Calu3 (cell line): ENCODE measurements at regions of chr1 and their contacts with region 1.

Region 1: GRCh38 chr1:219347921-219348391 is 174.3 kb downstream of the LYPLAL1 start:
- DNase-seq: no peak
- H3K4me3 Mint-ChIP-seq: no peak overlapping the region
- H3K27ac Mint-ChIP-seq: no peak overlapping the region
- H3K4me1 Mint-ChIP-seq: no peaks in the 10 kb centered on the region
- H3K27me3 Mint-ChIP-seq: no peaks in the 10 kb centered on the region
- CTCF ChIP-seq: no peak

Region 2: GRCh38 chr1:218837051-218837450 is 510.9 kb before region 1 on chr1:
- CTCF ChIA-PET with region 1: no interaction called
- intact Hi-C with region 1: no loop called
- DNase-seq: no peak
- H3K4me3 Mint-ChIP-seq: no peak overlapping the region
- H3K27ac Mint-ChIP-seq: no peak overlapping the region
- H3K4me1 Mint-ChIP-seq: peaks cover 9% of the 10 kb centered on the region
- H3K27me3 Mint-ChIP-seq: no peaks in the 10 kb centered on the region
- CTCF ChIP-seq: no peak

Region 3: DNA sequence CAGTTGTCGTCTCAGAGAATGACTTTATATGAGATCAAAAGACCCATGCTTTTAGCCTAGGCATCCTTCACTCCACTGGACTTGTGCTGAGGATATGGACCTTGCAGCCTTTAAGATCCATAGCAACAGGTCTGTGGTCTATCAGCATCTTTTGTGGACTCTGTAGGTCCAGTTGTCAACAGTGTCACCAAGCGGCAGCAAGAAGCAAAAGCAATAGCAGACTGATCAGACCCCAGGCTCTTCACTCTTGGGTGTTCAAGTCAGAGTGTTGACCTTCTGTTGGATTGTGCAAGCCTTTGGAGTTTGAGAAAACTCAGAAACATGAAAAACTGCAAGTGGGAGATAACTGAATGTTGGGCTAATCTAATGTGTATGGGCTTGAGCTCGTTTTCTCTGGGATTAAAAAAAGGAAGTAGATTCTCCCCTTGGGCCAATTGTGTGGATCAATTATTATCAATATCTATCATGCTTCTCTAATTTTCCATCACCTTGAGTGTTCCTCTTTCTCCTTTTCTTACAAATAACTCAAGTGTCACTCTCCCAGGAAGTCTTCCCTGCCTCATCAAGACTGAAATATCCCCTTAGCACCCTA is 30.1 kb before region 1 on chr1:
- CTCF ChIA-PET with region 1: interaction called, 10 read pairs
- intact Hi-C with region 1: no loop called
- DNase-seq: peak; percentile 31
- H3K4me3 Mint-ChIP-seq: no peak overlapping the region
- H3K27ac Mint-ChIP-seq: no peak overlapping the region
- H3K4me1 Mint-ChIP-seq: peaks cover under 1% of the 10 kb centered on the region
- H3K27me3 Mint-ChIP-seq: no peaks in the 10 kb centered on the region
- CTCF ChIP-seq: no peak

Region 4: DNA sequence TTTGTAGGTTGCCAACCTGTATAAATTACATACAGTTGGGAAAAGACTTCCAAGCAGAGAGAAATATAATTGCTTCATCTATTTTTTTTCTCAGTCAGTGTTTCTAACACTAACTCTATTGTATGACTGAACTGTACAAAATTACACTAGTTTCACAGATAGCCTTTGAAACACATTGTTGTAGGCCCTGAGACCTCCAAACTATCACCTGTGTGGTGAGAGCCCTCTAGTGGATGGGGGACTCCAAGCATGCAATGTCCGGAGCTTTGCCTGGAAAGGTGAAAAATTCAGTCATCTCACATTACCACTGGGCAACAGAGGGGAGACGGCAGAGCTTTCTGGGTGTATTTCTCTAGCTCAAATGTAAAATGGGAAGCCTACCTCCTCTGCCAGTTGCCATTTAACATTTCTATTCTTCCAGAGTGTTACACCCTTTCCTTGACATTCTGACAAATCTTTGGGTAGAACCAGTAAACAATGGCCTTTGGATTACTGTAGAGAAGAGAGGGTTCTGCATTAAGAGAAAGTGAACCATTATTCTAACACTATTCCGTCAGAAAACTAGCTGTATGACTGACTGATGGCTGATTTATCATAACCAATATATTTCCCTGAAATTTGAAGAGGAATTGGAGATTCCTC is 38.0 kb after region 1 on chr1:
- CTCF ChIA-PET with region 1: no interaction called
- intact Hi-C with region 1: no loop called
- DNase-seq: peak; percentile 84
- H3K4me3 Mint-ChIP-seq: no peak overlapping the region
- H3K27ac Mint-ChIP-seq: no peak overlapping the region
- H3K4me1 Mint-ChIP-seq: peaks cover 16% of the 10 kb centered on the region
- H3K27me3 Mint-ChIP-seq: no peaks in the 10 kb centered on the region
- CTCF ChIP-seq: peak; percentile 77